ENCODE measurements at regions of chr17 and their contacts with region 1.

Region 1: DNA sequence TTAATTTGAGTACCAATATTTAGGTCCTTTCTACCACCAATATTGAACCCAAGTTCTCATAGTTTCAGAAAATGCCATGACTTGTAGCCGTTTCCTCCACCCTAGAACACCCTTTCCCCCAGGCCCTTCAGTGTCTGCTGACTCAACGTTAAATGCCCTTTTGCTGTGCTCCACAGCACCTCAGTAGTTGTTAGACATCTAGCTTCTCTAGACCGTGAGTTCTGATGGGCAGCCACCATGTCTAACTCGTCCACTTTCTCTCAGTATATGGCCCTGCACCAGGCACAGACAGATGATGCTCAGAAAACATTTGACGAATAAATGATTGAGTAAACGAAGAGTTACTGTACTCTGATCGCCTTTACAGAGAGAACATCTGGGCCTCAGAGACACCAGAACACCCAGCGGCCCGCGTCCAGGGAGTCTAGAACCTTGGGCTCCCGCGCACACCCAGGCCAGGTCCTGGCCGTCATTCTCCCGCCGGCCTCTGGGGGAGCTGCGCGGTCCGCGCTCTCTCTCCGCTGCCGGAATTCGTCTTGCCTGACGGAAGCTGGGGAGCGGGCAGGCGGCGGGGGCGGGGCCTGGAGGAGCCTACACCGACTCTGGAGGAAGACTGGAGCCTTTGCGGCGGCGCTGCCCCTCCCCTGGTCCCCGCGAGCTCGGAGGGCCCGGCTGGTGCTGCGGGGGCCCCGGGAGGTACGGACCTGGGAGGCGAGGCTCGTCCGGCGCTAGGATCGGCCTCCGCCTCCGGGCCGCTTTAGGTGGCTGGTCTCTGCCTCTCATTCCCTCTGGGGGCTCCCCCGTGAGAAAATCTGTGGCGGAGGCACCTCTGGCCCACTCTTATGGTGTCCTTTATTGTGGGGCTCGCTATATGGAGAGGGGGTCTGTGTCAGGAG is at the start of gene NKIRAS2:
- DNase-seq: peak; percentile 97
- ATAC-seq: peak; percentile 78
- H3K4me3 Mint-ChIP-seq: peak within 1 kb of the TSS; percentile 100
- H3K27ac Mint-ChIP-seq: peak within 1 kb of the TSS; percentile 88
- H3K4me1 Mint-ChIP-seq: peaks cover 52% of the 10 kb centered on the region
- H3K27me3 Mint-ChIP-seq: no peaks in the 10 kb centered on the region
- total RNA-seq, gene NKIRAS2: 16.3 to 17.2 TPM

Region 2: DNA sequence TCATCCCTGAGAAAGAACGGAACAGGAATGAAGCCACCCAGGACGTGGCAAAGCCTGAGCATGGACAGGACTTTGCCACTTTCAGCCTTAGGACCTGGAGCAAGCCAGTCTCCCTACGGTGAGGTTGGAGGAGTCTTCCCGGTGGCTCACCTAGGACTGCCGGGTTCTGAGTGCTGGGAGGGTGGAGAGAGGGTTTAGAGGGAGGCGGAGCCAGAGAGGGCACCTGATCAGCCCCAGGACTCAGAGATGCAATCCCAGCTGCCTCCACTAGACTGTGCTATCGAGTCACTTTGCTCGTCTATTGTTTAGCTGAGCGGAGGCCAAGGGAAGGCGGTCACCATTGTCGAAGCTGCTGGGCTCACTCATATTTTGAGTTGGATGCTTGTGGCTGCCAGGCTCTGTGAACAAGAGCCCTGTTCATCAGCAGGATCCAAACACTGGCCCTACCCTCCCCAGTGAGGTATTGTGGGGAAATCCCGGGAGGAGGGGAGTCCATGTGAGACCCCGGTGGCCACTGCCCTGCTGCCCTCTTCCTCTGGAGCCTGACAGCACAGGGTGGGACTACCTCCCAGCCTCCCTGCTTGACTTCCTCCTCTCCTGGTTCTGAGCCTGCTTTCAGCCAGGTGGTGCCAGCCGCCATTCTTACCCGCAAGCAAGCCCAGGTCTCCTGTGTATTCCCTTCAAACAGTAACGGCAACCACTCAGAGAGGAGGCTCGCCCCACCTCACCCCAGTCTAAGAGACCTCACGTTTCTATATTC is 440.1 kb before region 1 on chr17:
- CTCF ChIA-PET with region 1: no interaction called
- POLR2A ChIA-PET with region 1: no interaction called
- intact Hi-C with region 1: no loop called
- DNase-seq: peak; percentile 89
- ATAC-seq: peak; percentile 99
- H3K4me3 Mint-ChIP-seq: no peak overlapping the region
- H3K27ac Mint-ChIP-seq: no peak overlapping the region
- H3K4me1 Mint-ChIP-seq: no peaks in the 10 kb centered on the region
- H3K27me3 Mint-ChIP-seq: peaks cover 20% of the 10 kb centered on the region

Region 3: DNA sequence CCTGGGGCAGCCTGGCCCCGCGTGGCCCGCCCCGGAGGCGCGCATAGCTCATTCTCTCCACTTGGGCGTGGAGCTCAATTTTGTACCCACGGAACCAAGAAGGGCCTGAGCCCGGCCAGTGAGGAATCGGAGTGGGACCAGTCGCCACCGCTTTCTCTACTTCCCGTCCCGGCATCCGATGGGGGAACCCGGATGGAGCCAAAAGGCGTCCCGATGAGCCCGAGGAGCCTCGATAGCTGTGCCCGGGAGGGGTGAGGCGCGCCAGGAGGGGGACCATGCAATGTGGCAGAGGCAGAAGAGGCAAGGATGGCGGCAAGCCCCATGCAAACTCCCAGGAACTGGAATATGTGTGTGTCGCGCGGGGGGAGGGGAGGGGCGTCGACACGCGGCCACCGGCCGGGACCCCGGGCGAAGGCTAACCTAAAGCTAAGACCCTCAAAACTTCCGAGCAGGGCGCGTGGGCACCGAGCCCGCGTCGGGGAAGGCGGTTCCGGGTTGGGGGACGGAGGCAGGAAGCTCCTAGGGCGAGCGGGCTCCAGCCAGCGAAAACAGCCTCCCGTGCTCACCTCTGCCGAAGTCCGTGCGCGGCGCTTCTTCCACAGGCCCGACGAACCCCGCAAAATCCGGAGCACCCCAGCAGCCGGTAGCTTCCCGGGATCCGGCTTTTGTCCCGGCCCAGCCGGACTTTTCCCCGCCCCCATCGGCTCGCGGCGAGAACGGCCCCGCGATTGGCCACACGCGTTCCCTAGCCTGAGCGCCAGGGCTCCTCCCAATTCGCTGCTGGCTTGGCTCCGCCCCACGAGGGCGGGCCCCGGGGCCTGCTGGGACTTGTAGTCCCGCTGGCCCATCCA is 101.2 kb before region 1 on chr17 and contains the start of gene ACLY:
- CTCF ChIA-PET with region 1: interaction called, 3 read pairs
- POLR2A ChIA-PET with region 1: interaction called, 3 read pairs
- intact Hi-C with region 1: loop called in 1 of 2 experiments (anchors 1 kb)
- DNase-seq: peak; percentile 98
- ATAC-seq: peak; percentile 99
- H3K4me3 Mint-ChIP-seq: peak within 1 kb of the TSS; percentile 90
- H3K27ac Mint-ChIP-seq: peak within 1 kb of the TSS; percentile 80
- H3K4me1 Mint-ChIP-seq: peaks cover 37% of the 10 kb centered on the region
- H3K27me3 Mint-ChIP-seq: no peaks in the 10 kb centered on the region
- total RNA-seq, gene ACLY: 189 to 192 TPM

Region 4: DNA sequence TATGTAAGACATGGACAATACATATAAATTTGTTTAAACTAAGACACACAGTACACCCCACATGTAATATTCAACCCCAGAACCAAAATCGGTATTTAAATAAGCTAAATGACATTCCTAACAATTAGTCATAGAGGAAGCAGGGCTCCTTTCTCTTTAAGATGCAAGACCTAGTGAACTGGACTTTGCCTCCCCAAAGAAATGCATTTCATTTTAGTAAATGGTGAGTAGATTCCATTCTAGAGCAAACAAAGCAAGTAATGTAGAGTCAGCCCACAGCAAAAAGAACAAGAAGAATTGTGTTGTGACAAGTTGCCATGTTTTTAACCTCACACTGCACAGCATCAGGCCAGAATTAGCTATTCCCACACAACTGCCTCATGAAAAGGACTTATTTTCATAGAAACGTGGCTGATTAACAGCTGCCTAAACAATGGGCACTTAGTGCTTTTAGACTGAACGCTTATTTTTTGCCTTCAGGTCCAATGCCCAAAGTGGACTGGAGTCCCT is 16.9 kb before region 1 on chr17:
- CTCF ChIA-PET with region 1: interaction called, 10 read pairs
- POLR2A ChIA-PET with region 1: no interaction called
- intact Hi-C with region 1: no loop called
- DNase-seq: no peak
- ATAC-seq: no peak
- H3K4me3 Mint-ChIP-seq: no peak overlapping the region
- H3K27ac Mint-ChIP-seq: no peak overlapping the region
- H3K4me1 Mint-ChIP-seq: peaks cover 16% of the 10 kb centered on the region
- H3K27me3 Mint-ChIP-seq: no peaks in the 10 kb centered on the region

Region 5: DNA sequence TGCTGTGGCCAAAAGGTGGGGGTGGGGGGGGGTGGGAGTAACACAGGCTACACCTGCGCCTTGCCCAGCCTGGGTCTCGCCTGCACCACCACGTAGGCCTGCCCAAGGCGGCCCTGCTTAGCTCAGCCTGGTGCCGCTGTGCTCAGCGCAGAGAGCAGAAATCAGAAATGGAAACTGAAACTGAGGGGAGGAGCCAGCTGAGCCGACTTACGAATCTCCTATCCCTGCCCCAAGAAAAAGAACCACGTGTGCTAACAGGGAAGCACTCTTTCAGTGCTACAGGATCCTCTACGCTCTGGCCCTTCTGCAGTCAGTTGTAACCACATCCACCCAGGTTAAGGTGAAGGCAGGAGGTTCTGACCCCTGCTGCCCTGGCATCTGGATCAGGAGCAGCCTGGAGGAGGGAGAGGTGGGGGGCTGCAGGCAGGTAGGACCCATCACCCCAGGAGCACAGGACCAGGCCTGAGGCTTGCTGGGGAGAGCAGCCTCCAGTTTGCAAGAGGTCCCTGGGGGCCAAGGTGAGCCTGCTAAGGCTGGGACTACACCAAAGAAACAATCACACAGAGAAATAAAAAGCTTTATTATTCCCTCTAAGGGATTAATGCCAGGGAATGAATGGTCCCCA is 92.9 kb after region 1 on chr17 and contains the start of gene DHX58:
- CTCF ChIA-PET with region 1: interaction called, 22 read pairs
- POLR2A ChIA-PET with region 1: interaction called, 3 read pairs
- intact Hi-C with region 1: loop called in 1 of 2 experiments (anchors 1 kb)
- DNase-seq: peak; percentile 89
- ATAC-seq: peak; percentile 86
- H3K4me3 Mint-ChIP-seq: peak within 1 kb of the TSS; percentile 77
- H3K27ac Mint-ChIP-seq: peak within 1 kb of the TSS; percentile 97
- H3K4me1 Mint-ChIP-seq: peaks cover 35% of the 10 kb centered on the region
- H3K27me3 Mint-ChIP-seq: no peaks in the 10 kb centered on the region
- total RNA-seq, gene DHX58: 23.8 to 31.1 TPM

Region 6: DNA sequence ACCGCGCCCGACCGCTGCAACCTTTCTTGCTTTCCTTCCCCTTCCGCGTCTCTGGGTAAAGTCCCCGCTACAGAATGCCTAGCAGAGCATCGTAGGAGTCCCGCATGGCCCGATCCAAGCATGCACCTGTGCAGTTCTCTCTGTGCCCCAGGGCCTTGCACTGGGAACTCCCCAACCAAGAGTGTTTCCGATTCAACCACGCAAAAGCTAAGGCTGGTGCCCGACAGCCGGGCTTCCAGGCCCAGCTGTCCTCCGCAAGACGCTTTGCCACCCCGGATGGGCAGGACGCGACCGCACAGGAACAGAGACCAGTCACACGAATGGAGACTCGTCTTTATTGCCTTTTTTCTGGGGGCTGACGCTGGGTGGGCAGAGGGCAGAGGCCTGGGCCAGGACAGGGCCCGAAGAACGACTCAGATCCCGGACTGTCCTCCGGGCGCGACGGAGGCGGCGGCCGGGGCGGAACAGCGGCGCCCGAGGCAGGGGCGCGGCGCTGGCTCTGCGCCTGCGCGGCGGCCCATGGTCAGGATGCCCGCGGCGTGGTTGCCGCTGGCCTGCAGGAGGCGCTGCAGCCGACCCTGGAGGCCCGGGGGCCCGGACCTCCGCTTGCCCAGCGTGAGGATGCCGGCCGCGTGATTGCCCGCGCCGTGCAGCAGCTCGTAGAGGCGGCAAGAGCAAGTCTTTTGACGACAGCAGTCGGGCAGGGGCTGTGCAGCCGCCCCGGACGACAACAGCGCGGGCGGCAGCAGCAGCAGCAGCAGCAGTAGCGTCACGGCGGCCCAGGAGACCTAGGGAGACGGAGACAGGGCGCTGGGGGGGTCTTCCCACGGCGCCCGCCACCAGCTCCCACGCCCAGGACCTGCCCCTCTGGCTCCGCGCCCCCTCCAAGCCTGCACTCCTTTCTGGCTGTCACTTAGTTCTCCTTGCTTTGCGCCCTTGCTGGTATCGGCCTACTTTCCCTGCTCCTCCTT is 164.3 kb after region 1 on chr17:
- CTCF ChIA-PET with region 1: interaction called, 6 read pairs
- POLR2A ChIA-PET with region 1: no interaction called
- intact Hi-C with region 1: loop called in 1 of 2 experiments (anchors 1 kb)
- DNase-seq: peak; percentile 89
- ATAC-seq: peak; percentile 70
- H3K4me3 Mint-ChIP-seq: peak overlapping the region; percentile 91
- H3K27ac Mint-ChIP-seq: peak overlapping the region; percentile 88
- H3K4me1 Mint-ChIP-seq: peaks cover 46% of the 10 kb centered on the region
- H3K27me3 Mint-ChIP-seq: peaks cover 7% of the 10 kb centered on the region

Region 7: GRCh38 chr17:42337442-42337841 is 317.7 kb after region 1 on chr17:
- CTCF ChIA-PET with region 1: no interaction called
- POLR2A ChIA-PET with region 1: interaction called, 4 read pairs
- intact Hi-C with region 1: loop called in 1 of 2 experiments (anchors 1 kb)
- DNase-seq: peak; percentile 93
- ATAC-seq: peak; percentile 60
- H3K4me3 Mint-ChIP-seq: peak overlapping the region; percentile 53
- H3K27ac Mint-ChIP-seq: peak overlapping the region; percentile 94
- H3K4me1 Mint-ChIP-seq: peaks cover 86% of the 10 kb centered on the region
- H3K27me3 Mint-ChIP-seq: no peaks in the 10 kb centered on the region